ENCODE measurements at regions of chr2 and their contacts with region 1.

Region 1: GRCh38 chr2:241355983-241356870 is at the start of gene FARP2:
- DNase-seq: peak; percentile 98
- H3K4me3 Mint-ChIP-seq: peak within 1 kb of the TSS; percentile 79
- H3K27ac Mint-ChIP-seq: peak within 1 kb of the TSS; percentile 76
- H3K4me1 Mint-ChIP-seq: peaks cover 33% of the 10 kb centered on the region
- H3K27me3 Mint-ChIP-seq: no peaks in the 10 kb centered on the region
- total RNA-seq, gene FARP2: 36.5 and 43.1 TPM in 2 replicates

Region 2: DNA sequence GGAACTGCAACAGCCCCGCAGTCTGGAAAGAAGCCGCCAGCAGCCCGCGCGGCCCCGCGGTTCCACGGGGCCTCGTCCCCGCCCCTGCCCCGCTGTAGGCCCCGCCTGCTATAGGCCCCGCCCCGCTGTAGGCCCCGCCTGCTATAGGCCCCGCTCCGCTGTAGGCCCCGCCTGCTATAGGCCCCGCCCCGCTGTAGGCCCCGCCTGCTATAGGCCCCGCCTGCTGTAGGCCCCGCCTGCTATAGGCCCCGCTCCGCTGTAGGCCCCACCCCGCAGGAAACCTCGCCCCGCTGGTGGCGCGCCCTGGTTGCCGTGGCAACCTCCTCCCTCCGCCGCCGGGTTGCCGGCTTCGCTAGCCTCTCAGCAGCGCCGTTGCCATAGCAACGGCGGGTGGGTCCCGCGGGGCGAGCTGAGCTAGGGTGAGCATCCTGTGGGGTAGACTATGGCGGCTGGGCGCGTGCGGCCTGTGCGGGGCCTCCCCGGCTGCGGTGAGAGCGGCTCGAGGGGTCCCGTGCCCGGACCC is 524.0 kb before region 1 on chr2:
- intact Hi-C with region 1: loop called (anchors 2 kb)
- DNase-seq: peak; percentile 99
- H3K4me3 Mint-ChIP-seq: peak overlapping the region; percentile 77
- H3K27ac Mint-ChIP-seq: no peak overlapping the region
- H3K4me1 Mint-ChIP-seq: peaks cover 2% of the 10 kb centered on the region
- H3K27me3 Mint-ChIP-seq: peaks cover 23% of the 10 kb centered on the region

Region 3: DNA sequence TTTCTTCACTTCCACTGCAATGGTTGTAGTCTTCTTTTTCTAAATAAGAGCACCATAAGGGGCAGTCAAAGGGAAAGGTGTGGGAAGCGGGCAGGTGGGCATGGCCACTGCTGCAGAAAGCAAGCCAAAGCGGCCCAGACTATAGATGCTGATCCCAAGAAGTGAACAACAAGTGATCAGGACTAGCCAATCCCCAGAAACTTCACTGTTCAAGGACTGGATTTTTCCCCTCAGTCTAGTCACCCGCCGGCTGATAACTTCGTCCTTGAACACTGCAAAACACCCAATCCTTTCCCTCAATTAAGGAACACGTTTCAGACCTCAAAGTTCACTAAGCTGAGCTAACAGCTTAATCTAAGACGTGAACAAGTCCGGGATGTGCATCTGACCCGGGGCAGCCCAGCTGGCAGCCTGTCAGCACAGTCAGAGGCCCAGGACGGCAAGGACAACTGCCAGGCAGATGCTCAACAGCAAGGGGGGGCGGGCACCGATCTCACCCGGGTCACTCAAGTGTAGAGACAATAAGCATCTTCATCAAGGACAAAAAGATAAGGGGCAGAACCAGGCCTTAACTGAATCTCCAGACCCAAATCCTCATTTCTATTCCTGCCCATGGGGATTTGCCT is 100.6 kb before region 1 on chr2:
- intact Hi-C with region 1: no loop called
- DNase-seq: no peak
- H3K4me3 Mint-ChIP-seq: no peak overlapping the region
- H3K27ac Mint-ChIP-seq: no peak overlapping the region
- H3K4me1 Mint-ChIP-seq: peaks cover 4% of the 10 kb centered on the region
- H3K27me3 Mint-ChIP-seq: no peaks in the 10 kb centered on the region

Region 4: DNA sequence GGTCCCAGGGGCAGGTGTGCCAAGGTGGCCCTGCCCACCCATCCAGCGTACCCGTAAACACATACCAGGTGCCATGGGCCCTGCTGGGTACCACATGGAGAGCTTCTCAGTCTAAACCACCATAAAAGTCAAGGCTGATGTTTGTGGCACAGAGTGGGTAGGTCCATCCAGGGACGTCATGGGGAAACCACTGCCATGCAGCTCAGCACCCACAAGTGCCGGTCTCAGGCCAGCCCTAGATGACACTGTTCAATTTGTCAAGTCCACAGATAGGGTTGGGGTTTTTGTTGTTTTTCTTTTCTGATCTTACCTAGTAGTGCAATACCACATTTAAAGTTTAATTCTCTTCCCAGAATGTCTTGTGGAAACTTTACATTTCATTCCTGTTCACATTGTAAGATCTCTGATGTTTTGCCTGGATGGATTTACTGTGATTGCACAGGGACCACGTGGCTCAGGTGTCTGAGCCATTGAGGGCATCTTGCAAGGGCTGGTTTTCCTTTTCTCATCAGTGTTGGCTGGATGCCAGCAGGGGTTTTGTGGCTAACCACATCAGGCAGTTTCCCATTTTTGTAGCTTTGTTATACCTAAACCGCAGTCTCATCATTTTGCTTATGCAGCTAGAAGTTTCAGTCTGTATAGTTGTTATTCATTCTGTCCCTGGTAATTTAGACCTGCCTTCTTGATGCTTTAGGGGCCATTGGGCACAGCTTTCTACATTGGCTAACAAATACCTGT is 87.4 kb after region 1 on chr2:
- intact Hi-C with region 1: loop called (anchors 2 kb)
- DNase-seq: peak; percentile 97
- H3K4me3 Mint-ChIP-seq: peak overlapping the region; percentile 52
- H3K27ac Mint-ChIP-seq: peak overlapping the region; percentile 80
- H3K4me1 Mint-ChIP-seq: peaks cover 23% of the 10 kb centered on the region
- H3K27me3 Mint-ChIP-seq: peaks cover 29% of the 10 kb centered on the region

Region 5: DNA sequence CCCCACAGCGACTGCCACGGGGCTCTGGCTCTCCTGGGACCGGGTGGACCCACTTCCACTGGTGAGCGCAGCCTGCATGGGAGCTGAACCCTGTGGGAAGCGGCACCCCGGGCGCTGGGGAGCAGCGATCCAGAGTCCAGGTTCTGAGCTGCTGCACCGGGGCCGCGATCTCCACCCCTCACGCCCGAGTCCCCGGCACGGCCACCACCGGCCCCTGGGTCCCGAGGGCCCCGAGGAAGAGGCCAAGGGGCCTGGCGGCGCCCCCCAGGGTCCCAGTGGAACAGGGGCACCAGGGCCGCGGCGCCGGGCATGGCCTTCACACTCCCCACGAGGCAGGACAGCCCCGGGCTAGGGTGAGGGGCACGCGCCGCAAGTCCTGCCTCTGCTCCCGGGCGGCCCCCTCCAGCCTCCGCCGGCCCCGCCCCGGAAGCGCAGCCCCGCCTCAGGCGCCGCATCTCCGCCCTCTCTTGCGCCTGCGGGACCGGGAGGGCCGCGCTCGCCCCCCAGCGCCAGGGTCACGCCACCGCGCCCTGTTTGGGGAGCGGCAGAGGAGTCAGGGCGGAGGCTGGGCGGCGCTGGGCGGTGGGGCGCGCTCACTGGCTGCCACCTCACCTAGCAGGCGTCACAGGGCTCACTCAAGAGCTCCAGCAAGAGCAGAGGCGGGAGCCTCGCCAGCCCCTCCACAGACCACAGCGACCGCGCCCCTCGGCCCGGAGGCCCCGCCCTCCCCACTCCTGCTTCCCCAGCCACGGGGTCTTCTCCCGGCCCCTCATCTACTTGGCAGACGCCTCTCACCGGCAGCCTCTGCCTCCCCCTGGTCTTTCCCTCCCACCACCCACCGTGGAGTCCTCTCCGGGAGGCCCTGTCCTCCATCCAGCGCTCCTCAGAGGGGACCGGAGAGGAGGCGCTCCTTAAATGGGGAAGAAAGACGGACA is 253.9 kb after region 1 on chr2:
- intact Hi-C with region 1: loop called (anchors 2 kb)
- DNase-seq: peak; percentile 98
- H3K4me3 Mint-ChIP-seq: peak overlapping the region; percentile 71
- H3K27ac Mint-ChIP-seq: peak overlapping the region; percentile 67
- H3K4me1 Mint-ChIP-seq: peaks cover 14% of the 10 kb centered on the region
- H3K27me3 Mint-ChIP-seq: no peaks in the 10 kb centered on the region